ENCODE measurements at regions of chr4 and their contacts with region 1.

Region 1: DNA sequence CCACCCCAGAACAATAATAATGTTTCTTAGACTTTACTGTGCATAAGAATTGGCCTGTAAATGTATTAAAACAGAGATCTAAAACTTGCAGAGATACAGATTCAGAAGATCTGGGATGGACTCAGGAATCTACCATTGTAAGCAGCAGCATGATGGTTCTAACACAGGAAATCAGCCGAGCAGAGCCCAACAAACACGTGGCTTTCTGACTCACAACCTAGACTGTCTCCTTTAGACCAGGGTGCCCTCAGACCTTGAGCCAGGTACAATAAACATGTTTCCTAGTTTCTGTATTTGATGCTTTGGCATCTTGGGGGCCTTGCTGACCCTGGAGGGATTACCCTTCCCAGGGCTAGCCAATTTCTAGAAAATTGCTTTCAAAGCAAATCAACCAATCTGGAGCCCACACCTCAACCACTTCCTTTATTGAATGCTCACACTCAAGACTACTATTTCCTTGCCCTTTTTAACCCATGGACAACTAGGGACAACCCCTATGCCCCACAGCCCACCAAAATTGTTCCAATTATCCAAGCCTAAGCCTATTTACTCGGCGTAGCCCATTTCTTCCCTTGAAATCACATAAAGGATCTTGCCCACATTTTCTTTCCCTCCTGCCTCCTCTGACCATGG is 80.5 kb downstream of the TBC1D9 start:
- DNase-seq: no peak
- H3K4me3 ChIP-seq: no peak overlapping the region
- H3K27ac ChIP-seq: no peak overlapping the region
- H3K4me1 ChIP-seq: no peaks in the 10 kb centered on the region
- H3K27me3 ChIP-seq: no peaks in the 10 kb centered on the region
- CTCF ChIP-seq: no peak

Region 2: DNA sequence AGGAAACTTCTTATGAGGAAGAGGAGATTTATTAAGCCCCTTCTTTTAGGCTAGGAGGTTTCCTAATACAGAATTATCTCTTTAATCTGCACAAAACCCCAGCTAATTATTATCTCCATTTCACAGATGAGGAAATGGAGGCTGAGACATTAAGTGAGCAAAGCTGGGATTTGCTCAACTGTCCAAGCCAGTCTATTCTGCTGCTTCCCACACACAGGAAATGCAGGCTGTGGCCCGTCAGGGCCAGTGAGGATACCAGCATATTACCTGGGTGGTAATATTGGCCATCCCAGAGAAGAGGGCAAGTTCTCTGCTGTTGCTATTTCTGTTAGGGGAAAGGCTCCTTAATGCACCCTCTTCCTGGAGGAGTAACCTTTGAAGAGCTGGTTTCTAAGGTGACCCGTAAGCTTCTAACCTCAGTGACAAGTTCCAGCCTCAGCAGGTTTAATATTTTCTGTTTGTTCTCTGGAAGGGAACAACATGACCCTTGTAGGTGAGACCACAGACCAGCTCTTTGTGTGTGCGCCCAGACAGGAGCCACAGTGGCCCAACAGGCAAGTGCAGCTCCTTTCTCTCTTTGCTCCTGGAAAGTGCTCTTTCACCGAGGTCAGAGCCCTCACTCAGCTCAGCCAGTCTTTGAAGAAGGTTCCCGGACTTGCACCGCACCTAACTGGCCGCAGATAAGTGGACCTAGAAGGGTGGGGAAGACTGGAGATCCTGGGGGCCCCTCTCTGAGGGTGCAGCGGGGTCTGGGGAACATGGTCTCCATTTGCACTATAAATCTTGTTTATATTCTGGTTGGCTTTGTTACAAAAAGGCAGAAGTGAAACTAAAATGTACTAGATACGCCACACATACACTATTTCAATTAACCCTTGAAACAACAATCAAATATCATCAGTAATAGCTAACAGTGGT is 44.9 kb after region 1 on chr4:
- CTCF ChIA-PET with region 1: no interaction called
- dilution Hi-C with region 1: loop called (anchors 5 kb)
- in situ Hi-C with region 1: no loop called
- intact Hi-C with region 1: no loop called
- DNase-seq: no peak
- H3K4me3 ChIP-seq: peak overlapping the region in 1 of 3 experiments; percentile 15
- H3K27ac ChIP-seq: peak overlapping the region; percentile 3
- H3K4me1 ChIP-seq: peaks cover 38% of the 10 kb centered on the region
- H3K27me3 ChIP-seq: no peaks in the 10 kb centered on the region
- CTCF ChIP-seq: no peak

Region 3: DNA sequence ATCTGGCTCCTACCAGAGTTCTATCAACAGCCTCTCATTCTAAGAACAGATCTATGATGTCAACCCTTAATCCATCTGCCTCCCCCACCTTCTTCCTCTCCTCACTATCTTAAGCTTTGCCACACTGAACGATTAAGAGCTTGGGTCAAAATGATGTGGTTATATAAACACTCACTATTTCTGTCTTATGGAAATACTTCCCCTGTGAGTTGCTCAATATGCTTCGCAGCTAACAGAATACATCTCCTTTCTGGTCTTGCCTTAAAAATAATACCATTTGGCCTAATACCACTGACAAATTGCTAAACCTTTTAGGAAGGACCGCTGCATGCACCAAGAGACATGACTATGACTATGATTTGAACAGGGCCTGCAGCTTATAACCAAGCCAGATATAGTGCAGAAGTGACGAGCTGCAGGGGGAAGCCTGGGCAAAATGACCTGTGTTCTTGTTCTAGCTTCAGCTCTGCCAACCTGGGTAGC is 326.6 kb after region 1 on chr4:
- CTCF ChIA-PET with region 1: no interaction called
- dilution Hi-C with region 1: no loop called
- in situ Hi-C with region 1: no loop called
- intact Hi-C with region 1: no loop called
- DNase-seq: no peak
- H3K4me3 ChIP-seq: no peak overlapping the region
- H3K27ac ChIP-seq: no peak overlapping the region
- H3K4me1 ChIP-seq: no peaks in the 10 kb centered on the region
- H3K27me3 ChIP-seq: peaks cover 6% of the 10 kb centered on the region
- CTCF ChIP-seq: no peak

Measured in mammary epithelial cell (primary cell).